Activated CD8-positive, alpha-beta T cell treated with anti-CD3 and anti-CD28 coated beads for 36 hours (primary cell): ENCODE measurements at regions of chr6 and their contacts with region 1.

Region 1: DNA sequence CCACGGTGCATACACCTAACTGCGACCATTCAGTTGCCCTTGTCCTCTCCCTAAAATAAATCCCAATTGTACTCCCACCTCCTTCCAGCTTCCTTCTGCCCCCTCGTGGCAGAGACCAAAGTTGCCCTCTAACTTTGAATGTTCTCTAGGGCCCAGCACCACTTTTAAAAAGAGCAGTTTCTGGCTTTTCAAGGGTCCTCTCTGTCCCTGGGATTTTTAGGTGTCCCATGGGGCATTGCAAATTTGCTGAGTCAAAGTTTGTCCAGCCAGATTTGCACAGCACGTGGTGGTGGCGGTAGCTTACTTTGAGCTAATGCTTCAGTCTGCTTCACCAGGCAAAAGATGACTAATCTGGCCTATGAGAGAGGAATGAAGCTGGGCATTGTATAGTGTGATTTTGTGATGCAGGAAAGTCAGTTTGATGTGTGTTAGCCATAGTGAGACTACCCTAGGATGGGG is 100.2 kb downstream of the PERP start:
- DNase-seq: peak; percentile 52
- ATAC-seq: peak; percentile 65
- H3K4me3 Mint-ChIP-seq: no peak overlapping the region
- H3K27ac Mint-ChIP-seq: no peak overlapping the region
- H3K4me1 Mint-ChIP-seq: peaks cover 15% of the 10 kb centered on the region
- H3K27me3 Mint-ChIP-seq: no peaks in the 10 kb centered on the region
- CTCF ChIP-seq: peak; percentile 70

Region 2: GRCh38 chr6:138017166-138017757 is 10.2 kb after region 1 on chr6:
- CTCF ChIA-PET with region 1: interaction called, 10 read pairs
- POLR2A ChIA-PET with region 1: interaction called, 3 read pairs
- intact Hi-C with region 1: no loop called
- DNase-seq: no peak
- ATAC-seq: no peak
- H3K4me3 Mint-ChIP-seq: no peak overlapping the region
- H3K27ac Mint-ChIP-seq: no peak overlapping the region
- H3K4me1 Mint-ChIP-seq: peaks cover 3% of the 10 kb centered on the region
- H3K27me3 Mint-ChIP-seq: peaks cover 6% of the 10 kb centered on the region
- CTCF ChIP-seq: no peak